ENCODE measurements at regions of chrX and their contacts with region 1.

Region 1: DNA sequence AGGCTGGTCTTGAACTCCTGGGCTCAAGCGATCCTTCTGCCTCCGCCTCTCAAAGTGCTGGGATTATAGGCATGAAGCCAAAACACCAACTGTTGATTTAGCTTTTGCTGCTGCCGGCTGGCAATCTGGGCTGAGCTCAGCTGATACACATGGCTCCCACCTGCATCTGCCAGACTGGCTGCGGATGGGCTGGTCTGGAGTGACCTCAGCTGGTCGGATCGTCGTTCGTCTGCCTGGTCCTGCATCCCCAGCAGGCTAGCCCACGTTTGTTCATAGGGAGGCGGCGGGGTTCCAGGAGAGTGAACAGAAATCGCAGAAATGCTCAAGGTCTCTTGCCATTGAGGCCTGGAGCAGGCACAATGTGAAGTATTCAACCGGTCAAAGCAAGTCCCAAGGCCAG is 74.4 kb upstream of the DDX3X start:
- DNase-seq: no peak
- ATAC-seq: no peak
- H3K4me3 Mint-ChIP-seq: no peak overlapping the region
- H3K27ac Mint-ChIP-seq: no peak overlapping the region
- H3K4me1 Mint-ChIP-seq: peaks cover 6% of the 10 kb centered on the region
- H3K27me3 Mint-ChIP-seq: peaks cover 3% of the 10 kb centered on the region

Region 2: GRCh38 chrX:41180194-41180908 is 79.2 kb before region 1 on chrX:
- CTCF ChIA-PET with region 1: interaction called, 31 read pairs
- DNase-seq: peak; percentile 65
- ATAC-seq: peak; percentile 76
- H3K4me3 Mint-ChIP-seq: no peak overlapping the region
- H3K27ac Mint-ChIP-seq: peak overlapping the region; percentile 80
- H3K4me1 Mint-ChIP-seq: peaks cover 53% of the 10 kb centered on the region
- H3K27me3 Mint-ChIP-seq: no peaks in the 10 kb centered on the region